ENCODE measurements at regions of chr17 and their contacts with region 1.

Region 1: GRCh38 chr17:49556223-49556971 is 19.3 kb upstream of the NXPH3 start:
- DNase-seq: peak; percentile 49
- ATAC-seq: peak; percentile 94
- H3K4me3 ChIP-seq: no peak overlapping the region
- H3K27ac ChIP-seq: no peak overlapping the region; the same call in 1 of the 2 replicates
- H3K4me1 ChIP-seq: peaks cover 0 to 17% of the 10 kb centered on the region in 2 experiments; a peak in 1 of 4 replicates
- H3K27me3 ChIP-seq: no peaks in the 10 kb centered on the region
- CTCF ChIP-seq: peak; percentile 98 to 100 (median 100)
- POLR2A ChIP-seq: peak; percentile 21
- RAD21 ChIP-seq: peak; percentile 100

Region 2: GRCh38 chr17:49315551-49316257 is 240.7 kb before region 1 on chr17:
- CTCF ChIA-PET with region 1: interaction called, 51 read pairs
- POLR2A ChIA-PET with region 1: no interaction called
- RAD21 ChIA-PET with region 1: no interaction called
- intact Hi-C with region 1: loop called (anchors 1 kb)
- DNase-seq: peak; percentile 79
- ATAC-seq: peak; percentile 99
- H3K4me3 ChIP-seq: no peak overlapping the region
- H3K27ac ChIP-seq: no peak overlapping the region
- H3K4me1 ChIP-seq: peaks cover 0 to 13% of the 10 kb centered on the region in 2 experiments; a peak in 2 of 4 replicates
- H3K27me3 ChIP-seq: no peaks in the 10 kb centered on the region
- CTCF ChIP-seq: peak; percentile 77 to 96 (median 95)
- POLR2A ChIP-seq: no peak
- RAD21 ChIP-seq: peak; percentile 98

Region 3: GRCh38 chr17:49407981-49408501 is 148.4 kb before region 1 on chr17:
- CTCF ChIA-PET with region 1: interaction called, 65 read pairs
- POLR2A ChIA-PET with region 1: interaction called, 3 read pairs
- RAD21 ChIA-PET with region 1: interaction called, 5 to 11 read pairs
- intact Hi-C with region 1: loop called (anchors 2 kb)
- DNase-seq: peak; percentile 50
- ATAC-seq: peak; percentile 94
- H3K4me3 ChIP-seq: no peak overlapping the region
- H3K27ac ChIP-seq: no peak overlapping the region
- H3K4me1 ChIP-seq: peaks cover 0 to 3% of the 10 kb centered on the region in 2 experiments; a peak in 3 of 4 replicates
- H3K27me3 ChIP-seq: no peaks in the 10 kb centered on the region
- CTCF ChIP-seq: peak; percentile 99
- POLR2A ChIP-seq: no peak
- RAD21 ChIP-seq: peak; percentile 86

Region 4: DNA sequence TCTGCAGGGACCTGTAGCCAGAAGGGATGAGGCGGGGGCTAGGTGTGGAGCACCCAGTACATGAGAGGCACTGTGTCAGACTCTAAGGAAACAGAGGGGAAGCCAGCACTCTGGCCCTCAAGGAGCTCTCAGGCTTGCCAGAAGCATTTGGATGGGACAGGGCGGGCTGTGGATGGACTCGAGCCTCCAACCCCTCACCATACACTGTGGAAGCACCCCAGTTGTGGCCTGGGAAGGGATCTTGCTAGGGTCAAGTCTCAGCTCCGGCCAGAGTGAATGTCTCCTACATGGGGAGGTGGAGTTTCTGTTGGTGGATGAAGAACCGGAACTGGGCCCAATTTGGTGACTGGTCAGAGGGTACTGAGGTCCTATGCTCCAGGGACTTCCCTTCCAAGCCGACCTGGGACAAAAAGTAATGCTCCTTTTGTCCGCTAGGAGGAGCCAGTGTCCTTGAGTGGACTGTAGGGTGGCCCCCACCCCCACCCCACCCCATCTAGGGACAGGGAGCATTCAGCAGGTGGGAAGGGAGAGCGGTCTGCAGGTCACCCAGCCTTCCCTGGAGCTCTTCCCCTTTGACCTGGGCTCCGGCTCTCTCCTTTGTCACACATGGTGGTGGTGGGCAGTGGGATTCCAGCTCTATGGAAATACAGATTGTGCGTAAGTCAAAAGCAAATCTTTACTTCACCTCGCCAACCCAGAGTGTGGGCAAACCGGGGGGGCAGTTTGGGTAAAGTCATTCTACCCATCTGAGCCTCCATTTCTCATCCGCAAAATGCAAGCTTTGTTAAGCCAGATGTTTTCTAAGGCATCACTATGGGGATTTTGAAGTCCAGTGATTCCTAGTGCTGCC is 121.4 kb before region 1 on chr17:
- CTCF ChIA-PET with region 1: interaction called, 81 read pairs
- POLR2A ChIA-PET with region 1: no interaction called
- RAD21 ChIA-PET with region 1: interaction called, 3 to 5 read pairs
- intact Hi-C with region 1: loop called (anchors 1 kb)
- DNase-seq: peak; percentile 74
- ATAC-seq: peak; percentile 97
- H3K4me3 ChIP-seq: no peak overlapping the region
- H3K27ac ChIP-seq: no peak overlapping the region
- H3K4me1 ChIP-seq: no peaks in the 10 kb centered on the region
- H3K27me3 ChIP-seq: peaks cover 14% of the 10 kb centered on the region; the same call in 1 of the 2 replicates
- CTCF ChIP-seq: peak; percentile 82 to 88 (median 87)
- POLR2A ChIP-seq: no peak
- RAD21 ChIP-seq: peak; percentile 86

Region 5: DNA sequence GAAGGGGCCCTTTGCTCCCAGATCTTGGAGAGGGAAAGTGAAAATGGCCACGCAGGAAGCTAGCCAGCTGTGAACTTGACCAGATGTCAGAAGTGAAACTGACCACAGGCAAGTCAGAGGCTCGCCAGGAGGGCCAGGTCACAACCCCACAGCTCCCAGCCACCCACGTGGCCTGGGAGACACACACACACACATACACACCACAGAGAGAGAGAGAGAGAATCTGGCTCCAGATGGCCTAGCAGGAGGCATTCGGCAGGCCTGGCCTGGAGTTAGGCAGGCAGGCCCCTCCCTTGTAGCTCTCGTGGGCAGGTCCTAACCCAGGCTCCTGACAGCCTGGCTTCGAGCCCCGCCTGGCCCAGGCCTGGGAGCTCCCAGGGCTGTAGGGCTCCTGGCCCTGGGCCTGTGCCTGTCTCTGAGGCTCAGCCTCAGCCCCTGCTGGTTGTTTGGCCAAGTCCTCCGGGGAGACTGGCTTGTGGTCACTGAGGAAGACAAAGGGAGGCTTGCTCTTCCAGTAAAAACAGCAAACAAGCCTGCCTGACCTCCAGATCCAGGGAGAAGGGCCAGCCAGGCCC is 41.1 kb before region 1 on chr17:
- CTCF ChIA-PET with region 1: interaction called, 23 read pairs
- POLR2A ChIA-PET with region 1: interaction called, 3 read pairs
- RAD21 ChIA-PET with region 1: no interaction called
- intact Hi-C with region 1: no loop called
- DNase-seq: peak; percentile 36
- ATAC-seq: peak; percentile 96
- H3K4me3 ChIP-seq: no peak overlapping the region
- H3K27ac ChIP-seq: peak overlapping the region; percentile 42; the same call in 1 of the 2 replicates
- H3K4me1 ChIP-seq: peaks cover 18 to 22% of the 10 kb centered on the region in 2 experiments
- H3K27me3 ChIP-seq: no peaks in the 10 kb centered on the region
- CTCF ChIP-seq: 0 out of 6 replicates have a peak, but pooled peaks of 1 of the 3 experiments have one; percentile 7
- POLR2A ChIP-seq: peak; percentile 31
- RAD21 ChIP-seq: no peak

Region 6: DNA sequence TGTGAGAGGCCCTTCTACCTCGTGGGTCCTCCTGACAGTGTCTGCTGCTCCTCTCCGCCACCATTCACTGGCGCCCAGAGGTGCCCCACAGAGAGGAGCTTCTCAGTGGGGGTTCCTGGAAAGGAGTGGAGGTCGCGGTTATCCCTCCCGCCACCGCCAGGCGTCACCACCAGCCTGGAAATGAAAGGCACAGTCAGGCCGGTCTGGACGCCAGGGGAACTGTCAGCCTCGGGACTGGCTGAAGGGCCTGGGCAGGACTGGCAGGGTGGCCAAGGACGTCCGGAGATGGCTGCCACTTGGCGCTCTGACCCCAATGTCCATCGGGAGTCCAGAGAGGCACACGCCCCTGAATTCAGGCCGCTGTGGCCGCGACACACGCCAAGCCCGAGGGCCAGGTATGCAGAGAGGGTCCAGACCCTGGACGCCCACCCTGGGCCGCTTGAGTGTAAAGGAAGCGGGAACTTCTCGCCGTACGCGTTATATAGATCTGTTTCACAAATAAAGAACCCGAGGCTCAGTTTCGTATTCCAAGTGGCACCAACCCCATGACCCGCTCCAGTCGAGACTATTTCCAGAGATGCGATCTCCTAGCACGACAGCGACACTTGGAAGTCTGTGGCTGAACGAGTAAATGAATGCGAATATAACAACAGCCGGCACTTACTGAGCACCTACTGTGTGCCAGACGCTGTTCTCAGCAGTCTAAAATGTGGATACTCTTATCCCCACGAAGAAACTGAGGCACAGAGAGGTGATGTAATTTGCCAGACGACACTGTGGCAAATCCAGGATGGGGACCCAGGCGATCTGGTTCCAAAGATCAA is 11.7 kb after region 1 on chr17:
- CTCF ChIA-PET with region 1: interaction called, 23 read pairs
- POLR2A ChIA-PET with region 1: interaction called, 4 read pairs
- RAD21 ChIA-PET with region 1: interaction called in 1 of 2 experiments, 3 read pairs
- intact Hi-C with region 1: no loop called
- DNase-seq: peak; percentile 81
- ATAC-seq: peak; percentile 74
- H3K4me3 ChIP-seq: 0 out of 4 replicates have a peak overlapping the region, but pooled peaks of 1 of the 2 experiments have one; percentile 2
- H3K27ac ChIP-seq: no peak overlapping the region
- H3K4me1 ChIP-seq: peaks cover 0 to 17% of the 10 kb centered on the region in 2 experiments; a peak in 3 of 4 replicates
- H3K27me3 ChIP-seq: peaks cover 5% of the 10 kb centered on the region; the same call in 1 of the 2 replicates
- CTCF ChIP-seq: peak; percentile 98 to 99 (median 99)
- POLR2A ChIP-seq: no peak
- RAD21 ChIP-seq: peak; percentile 100

Region 7: GRCh38 chr17:49677933-49678847 is 121.8 kb after region 1 on chr17 and contains the start of gene SPOP:
- CTCF ChIA-PET with region 1: no interaction called
- POLR2A ChIA-PET with region 1: no interaction called
- RAD21 ChIA-PET with region 1: no interaction called
- intact Hi-C with region 1: no loop called
- DNase-seq: peak; percentile 100
- ATAC-seq: peak; percentile 95
- H3K4me3 ChIP-seq: peak within 1 kb of the TSS; percentile 66 to 84
- H3K27ac ChIP-seq: peak within 1 kb of the TSS; percentile 51
- H3K4me1 ChIP-seq: peaks cover 4 to 17% of the 10 kb centered on the region in 2 experiments; a peak in 3 of 4 replicates
- H3K27me3 ChIP-seq: no peaks in the 10 kb centered on the region
- CTCF ChIP-seq: no peak
- POLR2A ChIP-seq: no peak
- RAD21 ChIP-seq: no peak
- total RNA-seq, gene SPOP: 85.1 TPM

Region 8: GRCh38 chr17:49707608-49708514 is 151.5 kb after region 1 on chr17 and contains the start of gene SLC35B1:
- CTCF ChIA-PET with region 1: interaction called, 28 read pairs
- POLR2A ChIA-PET with region 1: interaction called, 3 read pairs
- RAD21 ChIA-PET with region 1: interaction called, 3 read pairs
- intact Hi-C with region 1: no loop called
- DNase-seq: peak; percentile 100
- ATAC-seq: peak; percentile 93
- H3K4me3 ChIP-seq: peak within 1 kb of the TSS; percentile 85 to 92
- H3K27ac ChIP-seq: peak within 1 kb of the TSS; percentile 77
- H3K4me1 ChIP-seq: peaks cover 16 to 21% of the 10 kb centered on the region in 2 experiments
- H3K27me3 ChIP-seq: no peaks in the 10 kb centered on the region
- CTCF ChIP-seq: peak; percentile 96 to 99 (median 98)
- POLR2A ChIP-seq: no peak
- RAD21 ChIP-seq: peak; percentile 74
- total RNA-seq, gene SLC35B1: 87.5 TPM

Region 9: GRCh38 chr17:50161023-50161910 is 604.9 kb after region 1 on chr17:
- CTCF ChIA-PET with region 1: no interaction called
- POLR2A ChIA-PET with region 1: no interaction called
- RAD21 ChIA-PET with region 1: no interaction called
- intact Hi-C with region 1: no loop called
- DNase-seq: peak; percentile 86
- ATAC-seq: peak; percentile 95
- H3K4me3 ChIP-seq: peak overlapping the region; percentile 46 to 59
- H3K27ac ChIP-seq: no peak overlapping the region; the same call in 1 of the 2 replicates
- H3K4me1 ChIP-seq: peaks cover 20 to 34% of the 10 kb centered on the region in 2 experiments
- H3K27me3 ChIP-seq: no peaks in the 10 kb centered on the region
- CTCF ChIP-seq: peak; percentile 97 to 98 (median 97)
- POLR2A ChIP-seq: peak; percentile 81
- RAD21 ChIP-seq: peak; percentile 90